ENCODE measurements at regions of chr1 and their contacts with region 1.

Region 1: DNA sequence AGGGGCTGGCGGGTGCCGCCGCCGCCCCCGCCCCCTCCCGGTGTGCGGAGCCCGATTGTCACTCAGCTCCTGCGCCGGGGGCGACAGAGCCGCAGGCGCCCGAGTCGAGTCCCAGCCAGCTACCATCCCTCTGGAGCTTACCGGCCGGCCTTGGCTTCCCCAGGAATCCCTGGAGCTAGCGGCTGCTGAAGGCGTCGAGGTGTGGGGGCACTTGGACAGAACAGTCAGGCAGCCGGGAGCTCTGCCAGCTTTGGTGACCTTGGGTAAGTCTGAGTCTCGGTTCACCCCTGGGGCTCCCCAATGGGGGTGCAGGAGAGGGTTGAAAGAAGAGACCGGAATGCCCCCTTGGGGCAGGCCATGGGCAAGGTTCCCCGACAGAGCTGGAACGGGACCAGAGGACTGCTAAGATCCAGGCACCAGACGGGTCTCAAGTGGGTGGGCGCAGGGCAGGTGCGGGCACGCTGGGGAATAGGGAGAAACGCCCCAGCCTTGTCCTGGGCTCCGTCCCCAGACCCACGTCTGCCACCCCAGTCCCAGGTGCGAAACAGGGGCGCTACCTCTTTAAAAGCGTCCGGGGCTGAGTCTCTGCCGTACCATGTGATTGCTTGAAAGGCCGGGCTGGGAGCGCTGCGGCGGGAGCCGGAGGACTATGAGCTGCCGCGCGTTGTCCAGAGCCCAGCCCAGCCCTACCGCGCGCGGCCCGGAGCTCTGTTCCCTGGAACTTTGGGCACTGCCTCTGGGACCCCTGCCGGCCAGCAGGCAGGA is at the start of gene ADORA1:
- DNase-seq: peak; percentile 66 to 78
- H3K4me3 ChIP-seq: peak within 1 kb of the TSS; percentile 50
- H3K4me3 Mint-ChIP-seq: peak within 1 kb of the TSS; percentile 84
- H3K27ac Mint-ChIP-seq: peak within 1 kb of the TSS; percentile 65
- H3K4me1 ChIP-seq: peaks cover 16% of the 10 kb centered on the region
- H3K4me1 Mint-ChIP-seq: peaks cover 26% of the 10 kb centered on the region
- H3K27me3 ChIP-seq: no peaks in the 10 kb centered on the region
- H3K27me3 Mint-ChIP-seq: no peaks in the 10 kb centered on the region
- CTCF ChIP-seq: peak; percentile 11 to 46
- total RNA-seq, gene ADORA1: 46.0 and 50.4 TPM in 2 replicates

Region 2: DNA sequence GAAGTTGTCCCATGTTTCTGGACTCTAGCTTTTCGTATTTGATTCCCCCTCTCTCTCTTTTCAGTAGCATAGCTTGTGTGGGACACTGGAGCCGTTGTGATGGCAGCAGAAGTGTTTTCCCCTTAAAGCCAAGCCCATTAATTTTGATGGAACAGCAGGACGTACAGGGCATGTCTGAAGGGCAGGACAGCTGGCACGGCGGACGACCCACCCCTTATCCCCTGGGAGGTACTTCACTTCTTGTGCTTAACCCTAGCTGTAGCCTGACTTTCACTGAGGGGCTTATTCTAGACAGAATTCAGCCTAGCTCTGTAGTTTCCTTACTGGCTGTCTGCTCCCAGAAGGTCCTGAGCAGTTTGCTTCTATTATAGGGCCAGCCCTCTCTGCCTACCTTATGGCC is 110.2 kb before region 1 on chr1:
- CTCF ChIA-PET with region 1: no interaction called
- POLR2A ChIA-PET with region 1: no interaction called
- intact Hi-C with region 1: no loop called
- DNase-seq: no peak
- H3K4me3 ChIP-seq: no peak overlapping the region
- H3K4me3 Mint-ChIP-seq: no peak overlapping the region
- H3K27ac Mint-ChIP-seq: no peak overlapping the region
- H3K4me1 ChIP-seq: no peaks in the 10 kb centered on the region
- H3K4me1 Mint-ChIP-seq: no peaks in the 10 kb centered on the region
- H3K27me3 ChIP-seq: no peaks in the 10 kb centered on the region
- H3K27me3 Mint-ChIP-seq: no peaks in the 10 kb centered on the region
- CTCF ChIP-seq: no peak

Region 3: GRCh38 chr1:203076031-203076511 is 51.8 kb before region 1 on chr1:
- CTCF ChIA-PET with region 1: no interaction called
- POLR2A ChIA-PET with region 1: no interaction called
- intact Hi-C with region 1: no loop called
- DNase-seq: no peak
- H3K4me3 ChIP-seq: no peak overlapping the region
- H3K4me3 Mint-ChIP-seq: no peak overlapping the region
- H3K27ac Mint-ChIP-seq: no peak overlapping the region
- H3K4me1 ChIP-seq: no peaks in the 10 kb centered on the region
- H3K4me1 Mint-ChIP-seq: no peaks in the 10 kb centered on the region
- H3K27me3 ChIP-seq: no peaks in the 10 kb centered on the region
- H3K27me3 Mint-ChIP-seq: no peaks in the 10 kb centered on the region
- CTCF ChIP-seq: no peak

Region 4: GRCh38 chr1:203148125-203148524 is 20.3 kb after region 1 on chr1:
- CTCF ChIA-PET with region 1: interaction called, 10 read pairs
- POLR2A ChIA-PET with region 1: no interaction called
- intact Hi-C with region 1: no loop called
- DNase-seq: no peak
- H3K4me3 ChIP-seq: no peak overlapping the region
- H3K4me3 Mint-ChIP-seq: no peak overlapping the region
- H3K27ac Mint-ChIP-seq: no peak overlapping the region
- H3K4me1 ChIP-seq: peaks cover 12% of the 10 kb centered on the region; the same call in 1 of the 2 replicates
- H3K4me1 Mint-ChIP-seq: peaks cover 23% of the 10 kb centered on the region
- H3K27me3 ChIP-seq: no peaks in the 10 kb centered on the region
- H3K27me3 Mint-ChIP-seq: no peaks in the 10 kb centered on the region
- CTCF ChIP-seq: peak; percentile 27 to 35

Region 5: GRCh38 chr1:203172128-203173010 is 44.5 kb after region 1 on chr1:
- CTCF ChIA-PET with region 1: interaction called, 10 read pairs
- POLR2A ChIA-PET with region 1: no interaction called
- intact Hi-C with region 1: loop called (anchors 5 kb)
- DNase-seq: peak; percentile 63 to 80
- H3K4me3 ChIP-seq: no peak overlapping the region
- H3K4me3 Mint-ChIP-seq: no peak overlapping the region
- H3K27ac Mint-ChIP-seq: peak overlapping the region; percentile 69
- H3K4me1 ChIP-seq: peaks cover 70% of the 10 kb centered on the region
- H3K4me1 Mint-ChIP-seq: peaks cover 65% of the 10 kb centered on the region
- H3K27me3 ChIP-seq: no peaks in the 10 kb centered on the region
- H3K27me3 Mint-ChIP-seq: no peaks in the 10 kb centered on the region
- CTCF ChIP-seq: peak; percentile 81 to 82

Region 6: DNA sequence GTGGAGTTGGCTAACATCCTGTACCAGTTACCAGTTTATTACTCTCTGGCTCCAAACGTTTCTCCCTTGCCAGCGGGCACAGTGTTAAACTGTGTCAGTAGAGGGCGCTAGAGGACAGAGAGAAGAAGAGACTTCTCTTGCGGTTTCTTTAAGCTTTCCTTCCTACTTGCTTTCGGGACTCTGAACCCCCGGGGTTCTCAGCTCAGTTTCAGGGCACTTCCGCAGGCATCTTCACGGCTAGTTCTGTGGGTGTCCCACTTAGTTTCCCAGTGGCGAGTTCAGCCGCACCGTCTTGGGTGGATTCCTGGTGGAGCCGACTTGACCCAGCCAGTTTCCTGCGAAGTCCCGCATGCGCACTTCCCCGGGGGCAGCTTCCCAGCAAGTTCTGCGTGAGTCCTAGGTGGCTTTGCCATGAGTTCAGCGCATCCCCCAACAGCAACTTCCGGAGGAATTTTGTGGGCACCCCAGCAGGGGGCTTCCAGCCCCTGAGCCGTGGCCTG is 139.5 kb after region 1 on chr1:
- CTCF ChIA-PET with region 1: interaction called, 12 read pairs
- POLR2A ChIA-PET with region 1: no interaction called
- intact Hi-C with region 1: no loop called
- DNase-seq: peak; percentile 73 to 78
- H3K4me3 ChIP-seq: no peak overlapping the region
- H3K4me3 Mint-ChIP-seq: no peak overlapping the region
- H3K27ac Mint-ChIP-seq: no peak overlapping the region
- H3K4me1 ChIP-seq: peaks cover 6% of the 10 kb centered on the region; the same call in 1 of the 2 replicates
- H3K4me1 Mint-ChIP-seq: peaks cover 12% of the 10 kb centered on the region
- H3K27me3 ChIP-seq: no peaks in the 10 kb centered on the region
- H3K27me3 Mint-ChIP-seq: no peaks in the 10 kb centered on the region
- CTCF ChIP-seq: peak; percentile 80 to 83